ENCODE measurements at regions of chr15 and their contacts with region 1.

Region 1: DNA sequence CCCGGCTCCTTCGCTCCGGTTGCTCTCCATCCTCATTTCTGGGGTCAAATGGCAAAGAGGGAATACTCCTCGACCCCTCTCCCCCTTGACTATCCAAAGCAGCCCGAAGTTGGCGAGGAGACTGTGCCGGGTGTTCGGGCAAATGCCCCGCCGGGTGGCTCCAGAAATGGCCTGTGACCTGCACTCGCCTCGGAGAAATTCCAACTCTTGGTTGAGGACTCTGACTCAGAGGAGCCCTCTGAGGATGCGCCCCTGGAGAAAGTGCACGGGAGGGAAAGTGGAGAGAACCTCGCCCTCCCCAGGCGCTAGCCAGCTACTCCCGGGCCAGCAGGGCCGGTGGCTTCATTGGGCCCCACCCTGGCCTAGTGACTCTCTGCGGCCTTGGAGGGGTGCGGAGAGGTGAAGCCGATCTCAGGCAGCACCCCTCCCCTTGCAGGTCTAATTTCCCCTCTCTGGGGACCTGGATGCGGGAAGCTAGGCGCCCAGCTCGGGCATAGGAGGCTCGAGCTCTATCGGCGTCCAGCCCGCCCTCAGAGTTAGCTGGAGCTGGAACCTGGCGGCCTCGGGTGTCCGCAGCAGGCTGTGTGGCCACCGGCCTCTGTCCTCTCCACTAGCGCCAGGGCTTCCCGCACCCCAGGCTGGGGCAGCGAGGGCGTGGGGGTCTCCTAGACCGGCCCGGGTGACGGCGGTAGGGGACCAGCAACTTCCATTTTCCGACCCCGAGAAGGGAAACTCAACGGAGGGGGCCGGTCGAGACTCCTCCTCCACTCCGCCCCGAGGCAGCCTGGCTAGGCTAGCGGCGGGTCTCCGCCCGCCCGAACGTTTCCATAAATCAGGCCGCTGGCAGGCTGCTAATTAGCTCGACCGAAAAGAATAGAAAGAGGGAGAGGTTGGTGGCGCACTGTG is 29.4 kb downstream of the NR2F2 start:
- DNase-seq: peak; percentile 72

Region 2: GRCh38 chr15:96330450-96331145 is 29.3 kb before region 1 on chr15 and contains the start of gene NR2F2:
- CTCF ChIA-PET with region 1: interaction called, 7 read pairs
- POLR2A ChIA-PET with region 1: interaction called, 27 read pairs
- DNase-seq: peak; percentile 94

Region 3: GRCh38 chr15:96369825-96370621 is 10.2 kb after region 1 on chr15:
- CTCF ChIA-PET with region 1: interaction called, 4 read pairs
- POLR2A ChIA-PET with region 1: interaction called, 18 read pairs
- DNase-seq: no peak

Region 4: DNA sequence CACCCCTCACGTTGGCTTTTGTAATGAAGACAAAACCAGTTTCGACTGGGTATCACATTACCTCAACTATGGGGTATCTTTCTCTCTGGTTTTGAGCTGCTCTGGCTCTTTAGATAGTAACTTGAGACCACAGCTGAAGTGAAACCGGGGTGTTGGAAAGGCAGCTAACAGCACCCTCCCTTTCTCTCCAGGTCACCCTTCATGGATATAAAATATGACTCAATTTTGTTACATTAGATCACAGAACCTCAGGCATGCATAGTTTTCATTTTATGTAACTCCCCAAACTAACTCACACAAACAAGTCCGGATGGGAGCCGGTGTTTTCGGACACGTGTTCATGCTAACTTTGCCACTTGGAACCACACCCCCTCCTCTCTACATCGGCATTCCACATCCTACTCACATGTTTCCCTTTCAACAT is 61.3 kb after region 1 on chr15:
- CTCF ChIA-PET with region 1: no interaction called
- POLR2A ChIA-PET with region 1: interaction called, 15 read pairs
- DNase-seq: no peak

Measured in HEK293T (cell line).